K562 (cell line): ENCODE measurements at regions of chr10 and their contacts with region 1.

Region 1: DNA sequence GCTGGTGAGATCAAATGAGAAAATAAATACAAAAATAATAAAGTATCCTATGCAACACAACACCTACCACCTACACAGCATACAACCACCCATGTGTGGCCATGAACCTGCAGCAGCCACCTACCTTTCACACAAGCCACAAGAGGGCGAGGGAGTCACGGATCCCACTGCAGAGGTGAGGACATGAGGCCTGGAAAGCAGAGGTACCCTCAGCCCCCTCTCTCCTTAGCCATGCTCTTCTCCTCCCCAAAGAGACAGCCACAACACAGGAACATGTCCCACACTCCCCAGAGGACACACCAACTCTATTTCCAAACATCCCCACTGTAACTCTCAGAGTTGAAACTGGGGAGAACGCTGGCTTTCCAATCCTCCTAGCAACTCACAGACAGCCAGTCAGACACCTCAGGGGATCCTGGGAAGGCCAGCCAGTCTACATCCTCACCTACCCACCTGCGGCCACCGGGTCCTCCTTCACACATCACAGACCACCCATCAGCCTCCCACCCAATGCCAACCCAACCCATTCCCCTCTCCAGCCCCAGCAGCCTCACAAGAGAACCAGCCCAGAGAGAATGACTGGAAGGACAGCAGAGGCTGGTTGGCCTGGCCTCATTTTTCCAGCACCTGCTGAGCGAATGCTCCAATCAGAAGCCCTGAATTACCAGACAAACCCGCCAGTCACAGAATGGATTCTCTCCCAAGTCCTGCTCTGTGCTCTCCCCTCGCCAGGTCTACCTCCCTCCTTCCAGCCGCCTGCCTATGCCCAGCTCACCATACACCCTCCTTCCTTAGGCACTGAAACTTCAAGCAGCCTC is 18.4 kb downstream of the DLG5 start:
- DNase-seq: peak; percentile 73 to 85 (median 73)
- ATAC-seq: peak; percentile 82
- H3K4me3 ChIP-seq: no peak overlapping the region
- H3K27ac ChIP-seq: peak overlapping the region; percentile 79
- H3K4me1 ChIP-seq: peaks cover 54 to 68% of the 10 kb centered on the region in 2 experiments
- H3K27me3 ChIP-seq: no peaks in the 10 kb centered on the region
- CTCF ChIP-seq: peak; percentile 78 to 87 (median 82)
- EP300 ChIP-seq: peak; percentile 18; the same call in 1 of the 2 replicates
- POLR2A ChIP-seq: no peak
- RAD21 ChIP-seq: peak; percentile 65 to 85

Region 2: GRCh38 chr10:77889277-77889903 is 18.7 kb before region 1 on chr10:
- CTCF ChIA-PET with region 1: no interaction called
- POLR2A ChIA-PET with region 1: interaction called, 16 read pairs
- in situ Hi-C with region 1: no loop called
- intact Hi-C with region 1: no loop called
- DNase-seq: peak; percentile 52 to 85 (median 65)
- ATAC-seq: peak; percentile 94
- H3K4me3 ChIP-seq: no peak overlapping the region
- H3K27ac ChIP-seq: no peak overlapping the region
- H3K4me1 ChIP-seq: peaks cover 19 to 20% of the 10 kb centered on the region in 2 experiments
- H3K27me3 ChIP-seq: no peaks in the 10 kb centered on the region
- CTCF ChIP-seq: no peak
- EP300 ChIP-seq: no peak
- POLR2A ChIP-seq: no peak
- RAD21 ChIP-seq: no peak

Region 3: DNA sequence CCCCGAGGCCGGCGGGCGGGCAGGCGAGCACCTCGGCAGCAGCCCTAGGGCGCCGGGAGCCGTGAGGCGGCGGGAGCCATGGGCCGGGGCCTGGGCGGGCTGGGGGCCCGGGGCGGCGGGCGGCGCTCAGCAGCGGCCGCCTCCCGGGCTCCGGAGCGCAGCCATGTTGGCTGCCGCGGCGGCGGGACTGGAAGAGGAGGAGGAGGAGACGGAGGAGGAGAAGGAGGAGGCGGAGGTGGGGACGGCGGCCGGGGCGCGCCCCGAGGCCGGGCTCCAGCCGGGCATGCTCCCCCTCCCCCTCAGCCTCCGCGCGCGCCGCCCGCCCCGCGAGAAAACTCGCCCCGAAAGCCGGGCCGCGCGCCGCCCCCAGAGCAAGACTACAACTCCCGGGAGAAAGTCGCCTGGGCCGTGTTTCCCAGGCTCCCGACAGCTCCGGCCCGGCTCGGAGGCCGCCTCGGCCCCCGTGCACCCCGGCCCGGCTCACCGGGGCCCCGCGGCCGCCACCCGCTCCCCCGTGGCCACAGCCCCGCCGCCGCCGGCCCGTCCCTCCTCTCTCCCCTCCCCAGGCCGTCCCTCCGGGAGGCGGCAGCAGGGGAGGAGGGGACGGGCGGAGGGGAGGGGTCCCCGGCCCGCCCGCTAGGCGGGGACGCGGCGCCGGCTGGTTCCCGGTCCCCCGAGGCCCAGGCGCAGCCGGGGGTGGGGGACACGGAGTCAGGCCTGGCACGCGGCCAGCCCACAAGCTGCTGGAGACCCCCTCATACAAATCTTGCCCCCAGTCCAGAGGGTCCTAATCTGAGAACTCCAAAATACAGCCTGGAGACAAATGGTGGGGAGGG is 18.7 kb after region 1 on chr10 and contains the start of gene DLG5:
- CTCF ChIA-PET with region 1: no interaction called
- POLR2A ChIA-PET with region 1: interaction called, 83 read pairs
- in situ Hi-C with region 1: no loop called
- intact Hi-C with region 1: loop called (anchors 2 kb)
- DNase-seq: peak; percentile 80 to 91 (median 86)
- ATAC-seq: peak; percentile 64
- H3K4me3 ChIP-seq: peak within 1 kb of the TSS; percentile 71
- H3K27ac ChIP-seq: peak within 1 kb of the TSS; percentile 75
- H3K4me1 ChIP-seq: peaks cover 34 to 36% of the 10 kb centered on the region in 2 experiments; a peak in 4 of 5 replicates
- H3K27me3 ChIP-seq: no peaks in the 10 kb centered on the region
- CTCF ChIP-seq: no peak
- EP300 ChIP-seq: no peak
- POLR2A ChIP-seq: no peak
- RAD21 ChIP-seq: 0 out of 4 replicates have a peak, but pooled peaks of 1 of the 2 experiments have one; percentile 9
- polyA plus RNA-seq, gene DLG5: 1.4 to 1.5 TPM

Region 4: DNA sequence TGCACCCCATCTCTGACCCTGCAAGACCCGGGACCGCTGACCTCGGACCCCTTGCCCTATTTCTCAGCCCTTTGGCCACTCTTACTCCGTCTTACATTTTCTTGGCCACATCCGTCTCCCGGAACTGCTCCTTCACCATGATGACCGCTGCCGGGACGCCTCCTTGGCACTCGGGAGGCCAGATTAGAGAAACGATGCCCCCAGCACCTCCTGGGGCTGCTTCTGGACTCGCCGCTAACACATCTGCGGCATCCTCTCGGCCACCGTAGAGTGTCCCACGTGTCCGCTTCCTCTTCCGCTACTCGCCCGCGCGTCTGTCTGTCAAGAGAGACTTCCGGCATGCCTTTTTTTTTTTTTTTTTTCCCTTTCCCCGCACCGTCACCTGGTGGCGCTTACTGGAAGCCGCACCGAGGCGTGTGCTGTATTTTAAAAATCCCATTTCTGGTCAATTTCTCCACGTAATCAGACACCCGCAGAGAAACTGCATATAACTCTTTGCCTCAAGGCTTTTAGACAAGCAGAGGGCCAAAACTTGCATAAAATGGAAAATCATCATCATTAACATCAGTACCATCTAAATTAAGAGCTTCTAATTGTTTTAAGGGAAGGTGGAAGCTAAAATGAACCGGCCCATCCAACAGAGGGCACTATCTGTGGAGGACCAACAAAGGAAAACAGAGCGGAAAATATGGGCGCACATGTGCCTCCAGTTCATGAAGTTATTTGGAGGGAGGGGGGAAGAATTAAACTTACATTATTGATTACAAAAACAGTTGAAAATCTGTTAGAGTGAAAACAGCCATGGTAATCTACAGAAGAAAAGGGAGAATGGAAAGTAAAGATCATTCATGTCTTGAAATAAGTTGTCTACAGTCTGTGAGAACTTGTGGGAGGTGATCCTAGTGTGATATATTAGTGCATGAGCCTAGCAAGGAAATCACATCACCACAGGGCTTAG is 121.4 kb after region 1 on chr10 and contains the start of gene POLR3A:
- CTCF ChIA-PET with region 1: interaction called, 4 read pairs
- POLR2A ChIA-PET with region 1: no interaction called
- in situ Hi-C with region 1: no loop called
- intact Hi-C with region 1: loop called (anchors 2 kb)
- DNase-seq: peak; percentile 95 to 99 (median 96)
- ATAC-seq: peak; percentile 82
- H3K4me3 ChIP-seq: peak within 1 kb of the TSS; percentile 89
- H3K27ac ChIP-seq: peak within 1 kb of the TSS; percentile 87
- H3K4me1 ChIP-seq: peaks cover 8% of the 10 kb centered on the region in 2 experiments; a peak in 3 of 5 replicates
- H3K27me3 ChIP-seq: no peaks in the 10 kb centered on the region
- CTCF ChIP-seq: peak; percentile 91 to 96 (median 93)
- EP300 ChIP-seq: no peak; the same call in 1 of the 2 replicates
- POLR2A ChIP-seq: peak; percentile 92
- RAD21 ChIP-seq: peak; percentile 38 to 46
- polyA plus RNA-seq, gene POLR3A: 14.9 to 28.8 TPM